ENCODE measurements at regions of chr10 and their contacts with region 1.

Region 1: GRCh38 chr10:114649217-114649906 is 8.7 kb downstream of the ABLIM1 start:
- DNase-seq: no peak
- ATAC-seq: no peak
- H3K4me3 ChIP-seq: no peak overlapping the region
- H3K4me3 Mint-ChIP-seq: no peak overlapping the region
- H3K27ac ChIP-seq: no peak overlapping the region
- H3K27ac Mint-ChIP-seq: no peak overlapping the region
- H3K4me1 ChIP-seq: no peaks in the 10 kb centered on the region
- H3K4me1 Mint-ChIP-seq: no peaks in the 10 kb centered on the region
- H3K27me3 ChIP-seq: no peaks in the 10 kb centered on the region
- H3K27me3 Mint-ChIP-seq: no peaks in the 10 kb centered on the region
- CTCF ChIP-seq: no peak

Region 2: DNA sequence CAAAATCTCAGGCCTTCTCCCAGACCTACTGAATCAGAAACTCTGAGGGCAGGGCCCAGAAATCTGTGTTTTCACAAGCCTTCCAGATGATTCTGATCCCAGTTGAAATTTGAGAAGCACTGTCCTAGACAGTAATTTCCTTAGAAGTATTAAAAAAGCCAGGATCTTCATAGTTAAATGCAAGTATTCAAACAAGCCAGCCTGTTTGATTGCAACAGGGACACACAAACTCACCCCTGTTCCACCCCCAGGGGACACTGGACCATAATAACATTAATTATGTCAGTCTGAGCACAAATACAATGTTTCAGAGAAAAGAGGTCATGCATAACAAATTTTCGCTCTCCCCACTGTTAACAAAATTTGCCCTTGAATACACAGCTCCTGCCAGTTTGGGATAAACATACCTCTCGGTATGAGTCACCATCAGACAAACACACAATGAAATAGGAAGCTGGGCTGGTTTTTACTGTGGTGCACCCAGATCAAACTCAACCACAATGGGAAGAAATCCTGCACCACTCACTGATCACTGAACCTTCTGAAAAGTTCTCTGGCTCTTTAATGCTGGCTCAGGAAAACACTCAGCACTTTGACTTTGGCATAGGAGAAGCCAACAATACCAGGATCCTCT is 25.6 kb before region 1 on chr10:
- CTCF ChIA-PET with region 1: no interaction called
- POLR2A ChIA-PET with region 1: no interaction called
- intact Hi-C with region 1: loop called in 1 of 2 experiments (anchors 1 kb)
- DNase-seq: no peak
- ATAC-seq: no peak
- H3K4me3 ChIP-seq: no peak overlapping the region
- H3K4me3 Mint-ChIP-seq: no peak overlapping the region
- H3K27ac ChIP-seq: no peak overlapping the region
- H3K27ac Mint-ChIP-seq: no peak overlapping the region
- H3K4me1 ChIP-seq: no peaks in the 10 kb centered on the region
- H3K4me1 Mint-ChIP-seq: no peaks in the 10 kb centered on the region
- H3K27me3 ChIP-seq: no peaks in the 10 kb centered on the region
- H3K27me3 Mint-ChIP-seq: no peaks in the 10 kb centered on the region
- CTCF ChIP-seq: no peak

Measured in CD4-positive, alpha-beta T cell (primary cell).